B cell (primary cell): ENCODE measurements at regions of chrX and their contacts with region 1.

Region 1: DNA sequence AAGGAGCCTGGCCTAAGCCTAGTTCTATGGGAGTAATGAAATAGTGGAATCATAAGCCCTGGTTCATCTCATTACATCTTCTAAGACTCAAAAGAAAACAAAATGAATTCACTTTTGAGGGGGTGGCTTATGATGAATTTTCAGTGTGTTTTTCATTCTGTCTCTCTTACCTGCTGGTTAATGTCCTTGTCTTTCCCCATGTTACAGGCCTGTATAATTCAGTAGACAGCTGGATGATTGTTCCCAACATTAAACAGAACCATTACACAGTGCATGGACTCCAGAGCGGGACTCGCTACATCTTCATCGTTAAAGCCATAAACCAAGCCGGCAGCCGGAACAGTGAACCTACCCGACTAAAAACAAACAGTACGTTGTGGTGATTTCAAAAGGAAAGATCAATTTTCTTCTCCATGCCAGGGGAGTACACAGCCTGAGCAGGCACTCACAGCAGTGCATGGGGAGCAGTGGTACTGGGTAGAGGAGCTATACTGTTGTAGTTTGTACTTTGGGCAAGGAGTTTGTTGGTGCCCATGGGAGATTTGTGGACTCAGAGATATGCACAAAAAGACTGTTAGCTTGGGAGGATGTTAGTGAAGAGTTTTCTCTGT is 57.9 kb downstream of the TEX13B start:
- DNase-seq: no peak
- ATAC-seq: no peak
- H3K4me3 ChIP-seq: no peak overlapping the region
- H3K4me3 Mint-ChIP-seq: no peak overlapping the region
- H3K27ac ChIP-seq: no peak overlapping the region
- H3K27ac Mint-ChIP-seq: no peak overlapping the region
- H3K4me1 ChIP-seq: no peaks in the 10 kb centered on the region
- H3K4me1 Mint-ChIP-seq: no peaks in the 10 kb centered on the region
- H3K27me3 ChIP-seq: no peaks in the 10 kb centered on the region
- H3K27me3 Mint-ChIP-seq: peaks cover 5% of the 10 kb centered on the region
- CTCF ChIP-seq: no peak

Region 2: GRCh38 chrX:107734646-107735045 is 189.6 kb before region 1 on chrX:
- CTCF ChIA-PET with region 1: no interaction called
- POLR2A ChIA-PET with region 1: interaction called, 11 read pairs
- intact Hi-C with region 1: no loop called
- DNase-seq: no peak
- ATAC-seq: no peak
- H3K4me3 ChIP-seq: no peak overlapping the region
- H3K4me3 Mint-ChIP-seq: no peak overlapping the region
- H3K27ac ChIP-seq: no peak overlapping the region
- H3K27ac Mint-ChIP-seq: no peak overlapping the region
- H3K4me1 ChIP-seq: no peaks in the 10 kb centered on the region
- H3K4me1 Mint-ChIP-seq: peaks cover 10% of the 10 kb centered on the region
- H3K27me3 ChIP-seq: no peaks in the 10 kb centered on the region
- H3K27me3 Mint-ChIP-seq: no peaks in the 10 kb centered on the region
- CTCF ChIP-seq: no peak